ENCODE measurements at regions of chr6 and their contacts with region 1.

Region 1: DNA sequence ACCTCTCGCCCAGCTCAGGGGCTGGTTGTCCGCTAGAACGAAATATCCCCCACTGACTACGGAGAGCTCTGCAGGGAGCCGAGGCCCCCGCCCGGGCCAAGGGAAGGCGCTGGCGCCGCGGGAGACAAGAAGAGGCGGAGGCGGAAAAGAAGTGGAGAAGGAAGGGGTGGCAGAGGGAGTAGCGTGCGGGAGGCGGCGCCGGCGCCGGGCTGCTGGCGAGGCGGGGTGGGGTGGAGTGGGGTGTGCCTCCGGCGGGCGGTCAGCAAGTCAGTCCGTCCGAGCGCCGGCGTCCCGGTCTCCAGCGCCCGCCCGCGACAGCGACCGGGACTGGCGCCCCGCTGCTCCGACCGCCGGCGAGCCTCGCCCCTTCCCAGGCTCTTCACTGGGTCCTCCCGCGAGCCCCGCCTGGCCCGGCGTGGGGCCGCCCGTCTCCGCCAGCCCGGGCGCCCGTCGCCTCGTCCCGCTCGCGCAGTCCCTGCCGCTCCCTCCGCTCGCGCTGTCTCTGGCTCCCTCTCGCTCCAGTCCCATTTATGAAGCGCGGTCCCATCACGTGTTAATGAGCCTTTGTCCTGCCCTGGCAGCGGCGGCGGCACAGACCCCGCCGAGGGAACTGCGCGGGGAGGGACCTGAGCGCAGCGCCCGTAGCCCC is at the start of gene CNR1:
- DNase-seq: peak; percentile 83
- H3K4me3 ChIP-seq: peak within 1 kb of the TSS; percentile 97
- H3K27ac ChIP-seq: peak within 1 kb of the TSS; percentile 80
- H3K4me1 ChIP-seq: peaks cover 45% of the 10 kb centered on the region
- CTCF ChIP-seq: peak; percentile 36; the same call in 1 of the 2 replicates
- total RNA-seq, gene CNR1: 109 and 150 TPM in 2 replicates

Region 2: GRCh38 chr6:87701676-87702588 is 464.0 kb before region 1 on chr6 and contains the start of gene AKIRIN2:
- CTCF ChIA-PET with region 1: no interaction called
- POLR2A ChIA-PET with region 1: interaction called, 3 read pairs
- intact Hi-C with region 1: loop called (anchors 5 kb)
- DNase-seq: peak; percentile 100
- H3K4me3 ChIP-seq: peak within 1 kb of the TSS; percentile 94
- H3K27ac ChIP-seq: peak within 1 kb of the TSS; percentile 89
- H3K4me1 ChIP-seq: peaks cover 50% of the 10 kb centered on the region
- CTCF ChIP-seq: no peak
- total RNA-seq, gene AKIRIN2: 70.3 and 70.4 TPM in 2 replicates

Region 3: GRCh38 chr6:87907521-87907920 is 258.4 kb before region 1 on chr6:
- CTCF ChIA-PET with region 1: interaction called, 3 read pairs
- POLR2A ChIA-PET with region 1: interaction called, 153 read pairs
- intact Hi-C with region 1: no loop called
- DNase-seq: peak; percentile 72
- H3K4me3 ChIP-seq: no peak overlapping the region
- H3K27ac ChIP-seq: peak overlapping the region; percentile 99
- H3K4me1 ChIP-seq: peaks cover 98% of the 10 kb centered on the region
- CTCF ChIP-seq: no peak

Region 4: DNA sequence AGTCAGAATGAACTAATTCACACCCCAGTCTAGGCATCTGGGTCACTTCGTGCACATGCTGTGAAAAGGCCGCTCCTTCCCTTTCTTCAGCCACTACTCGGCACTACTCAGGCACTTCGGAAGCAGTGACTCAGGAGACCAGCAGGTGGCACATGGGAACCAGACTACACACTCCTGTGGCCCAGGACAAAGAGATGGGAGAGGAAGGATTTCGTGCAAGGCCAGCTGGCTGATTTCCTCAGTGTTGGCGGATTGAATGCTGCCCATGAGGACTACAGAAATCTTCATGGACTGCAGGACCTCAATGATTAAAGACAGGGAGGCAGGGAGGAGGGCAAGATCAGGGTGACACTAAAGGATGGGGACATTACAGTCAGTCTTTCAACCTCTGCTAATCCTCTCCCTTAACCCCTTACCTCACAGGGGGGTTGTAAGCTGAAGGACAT is 236.1 kb before region 1 on chr6:
- CTCF ChIA-PET with region 1: interaction called, 3 read pairs
- POLR2A ChIA-PET with region 1: interaction called, 71 read pairs
- intact Hi-C with region 1: loop called (anchors 1 kb)
- DNase-seq: peak; percentile 95
- H3K4me3 ChIP-seq: peak overlapping the region; percentile 10
- H3K27ac ChIP-seq: peak overlapping the region; percentile 99
- H3K4me1 ChIP-seq: peaks cover 91% of the 10 kb centered on the region
- CTCF ChIP-seq: peak; percentile 98

Region 5: GRCh38 chr6:88119769-88120168 is 46.2 kb before region 1 on chr6:
- CTCF ChIA-PET with region 1: no interaction called
- POLR2A ChIA-PET with region 1: no interaction called
- intact Hi-C with region 1: no loop called
- DNase-seq: peak; percentile 64
- H3K4me3 ChIP-seq: no peak overlapping the region
- H3K27ac ChIP-seq: no peak overlapping the region
- H3K4me1 ChIP-seq: peaks cover 26% of the 10 kb centered on the region
- CTCF ChIP-seq: no peak

Region 6: GRCh38 chr6:88492824-88493223 is 326.9 kb after region 1 on chr6:
- CTCF ChIA-PET with region 1: no interaction called
- POLR2A ChIA-PET with region 1: no interaction called
- intact Hi-C with region 1: loop called (anchors 5 kb)
- DNase-seq: peak; percentile 53
- H3K4me3 ChIP-seq: no peak overlapping the region
- H3K27ac ChIP-seq: no peak overlapping the region
- H3K4me1 ChIP-seq: peaks cover 27% of the 10 kb centered on the region
- CTCF ChIP-seq: peak; percentile 82

Measured in OCI-LY7 (cell line).